ENCODE measurements at regions of chr15 and their contacts with region 1.

Region 1: GRCh38 chr15:68328443-68328842 is 50.9 kb downstream of the FEM1B start:
- DNase-seq: no peak
- H3K4me3 ChIP-seq: no peak overlapping the region
- H3K27ac ChIP-seq: no peak overlapping the region
- H3K4me1 ChIP-seq: peaks cover 10 to 12% of the 10 kb centered on the region in 2 donors
- H3K27me3 ChIP-seq: no peaks in the 10 kb centered on the region
- CTCF ChIP-seq: no peak
- POLR2A ChIP-seq: no peak

Region 2: GRCh38 chr15:68364028-68364659 is 35.7 kb after region 1 on chr15:
- intact Hi-C with region 1: loop called in 1 of 2 experiments (anchors 5 kb)
- DNase-seq: no peak
- H3K4me3 ChIP-seq: no peak overlapping the region
- H3K27ac ChIP-seq: peak overlapping the region in 2 of 5 donors; percentile 32 to 38
- H3K4me1 ChIP-seq: peaks cover 5 to 17% of the 10 kb centered on the region in 2 donors
- H3K27me3 ChIP-seq: no peaks in the 10 kb centered on the region
- CTCF ChIP-seq: no peak
- POLR2A ChIP-seq: no peak

Region 3: GRCh38 chr15:68464448-68465090 is 136.1 kb after region 1 on chr15:
- intact Hi-C with region 1: loop called in 1 of 2 experiments (anchors 10 kb)
- DNase-seq: no peak
- H3K4me3 ChIP-seq: no peak overlapping the region
- H3K27ac ChIP-seq: no peak overlapping the region
- H3K4me1 ChIP-seq: no peaks in the 10 kb centered on the region
- H3K27me3 ChIP-seq: no peaks in the 10 kb centered on the region
- CTCF ChIP-seq: no peak
- POLR2A ChIP-seq: no peak

Measured in adrenal gland (tissue), 19 donors.